Right cardiac atrium (tissue), 5 donors: ENCODE measurements at regions of chr22 and their contacts with region 1.

Region 1: GRCh38 chr22:36636916-36637315 is 66.6 kb downstream of the CACNG2 start:
- DNase-seq: no peak
- ATAC-seq: no peak
- H3K4me3 ChIP-seq: no peak overlapping the region
- H3K27ac ChIP-seq: no peak overlapping the region
- H3K4me1 ChIP-seq: no peaks in the 10 kb centered on the region
- H3K27me3 ChIP-seq: peaks cover 4% of the 10 kb centered on the region

Region 2: GRCh38 chr22:36699915-36700314 is 63.0 kb after region 1 on chr22:
- intact Hi-C with region 1: loop called in 1 of 4 experiments (anchors 10 kb)
- DNase-seq: no peak
- ATAC-seq: no peak
- H3K4me3 ChIP-seq: no peak overlapping the region
- H3K27ac ChIP-seq: no peak overlapping the region
- H3K4me1 ChIP-seq: no peaks in the 10 kb centered on the region
- H3K27me3 ChIP-seq: peaks cover 6% of the 10 kb centered on the region

Region 3: DNA sequence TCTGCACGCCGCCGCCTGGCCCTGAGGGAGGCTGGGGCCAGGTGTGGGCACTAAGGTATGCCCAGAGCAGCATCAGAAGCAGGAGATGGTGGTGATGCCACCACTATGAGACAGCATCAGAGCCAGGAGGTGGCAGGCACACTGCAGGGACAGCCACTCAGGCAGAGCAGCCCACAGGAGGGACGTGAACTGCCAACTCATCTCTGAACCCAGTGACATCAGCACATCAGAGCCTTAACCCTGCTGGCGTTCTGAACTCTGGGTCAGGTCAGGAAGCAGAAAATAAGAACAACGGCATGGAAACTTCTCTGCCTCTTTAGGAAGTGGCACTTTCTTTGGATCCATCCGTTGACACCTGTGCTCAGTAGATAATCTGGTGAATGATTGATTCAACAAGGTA is 153.7 kb after region 1 on chr22:
- intact Hi-C with region 1: no loop called
- DNase-seq: no peak
- ATAC-seq: no peak
- H3K4me3 ChIP-seq: no peak overlapping the region
- H3K27ac ChIP-seq: no peak overlapping the region
- H3K4me1 ChIP-seq: no peaks in the 10 kb centered on the region
- H3K27me3 ChIP-seq: no peaks in the 10 kb centered on the region